Caco-2 (cell line): ENCODE measurements at regions of chr20 and their contacts with region 1.

Region 1: DNA sequence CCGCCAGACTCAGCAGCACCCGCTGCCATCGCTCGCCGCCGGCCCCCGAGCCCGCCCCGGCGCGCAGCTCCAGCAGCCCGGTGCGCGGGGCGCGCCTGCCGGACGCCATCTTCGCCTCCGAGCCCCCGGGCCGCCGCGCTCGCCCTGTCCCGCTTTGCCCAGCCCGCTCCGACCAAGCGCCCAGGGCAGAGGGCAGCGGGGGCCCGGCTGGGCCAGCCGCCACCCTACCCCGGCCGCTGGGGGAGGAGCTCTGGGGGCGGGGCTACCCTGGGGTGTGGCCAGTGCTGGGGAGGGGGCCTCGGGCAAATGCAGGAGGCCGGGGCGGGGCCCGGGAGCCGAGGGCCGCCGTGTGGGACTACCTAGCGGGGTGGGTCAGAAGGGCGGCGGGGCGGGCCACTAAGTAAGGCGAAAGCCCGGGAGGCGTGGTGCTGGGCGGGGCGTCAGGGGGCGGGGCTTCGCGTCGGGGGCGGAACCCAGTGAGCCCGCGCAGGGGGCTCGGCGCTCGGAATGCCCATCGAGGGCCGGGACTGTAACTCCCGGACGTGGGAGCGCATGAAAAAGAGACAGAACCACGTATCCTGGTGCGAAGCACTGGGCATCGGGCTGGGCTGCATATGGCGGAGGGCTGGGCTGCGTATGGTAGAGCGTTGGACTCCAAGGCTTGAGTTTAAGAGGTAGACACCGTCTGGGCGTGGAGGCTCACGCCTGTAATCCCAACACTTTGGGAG is at the start of gene SNTA1:
- DNase-seq: peak; percentile 100
- H3K4me3 ChIP-seq: peak within 1 kb of the TSS; percentile 72
- H3K4me3 Mint-ChIP-seq: peak within 1 kb of the TSS; percentile 89
- H3K27ac Mint-ChIP-seq: peak within 1 kb of the TSS; percentile 9
- H3K4me1 ChIP-seq: peaks cover 22% of the 10 kb centered on the region
- H3K4me1 Mint-ChIP-seq: peaks cover 26% of the 10 kb centered on the region
- H3K27me3 ChIP-seq: no peaks in the 10 kb centered on the region
- H3K27me3 Mint-ChIP-seq: no peaks in the 10 kb centered on the region
- CTCF ChIP-seq: no peak
- total RNA-seq, gene SNTA1: 13.6 and 15.4 TPM in 2 replicates

Region 2: GRCh38 chr20:33401184-33401920 is 42.3 kb before region 1 on chr20 and contains the start of gene CDK5RAP1:
- CTCF ChIA-PET with region 1: interaction called, 17 read pairs
- POLR2A ChIA-PET with region 1: interaction called, 15 read pairs
- intact Hi-C with region 1: loop called (anchors 1 kb)
- DNase-seq: peak; percentile 95 to 96
- H3K4me3 ChIP-seq: peak within 1 kb of the TSS; percentile 88
- H3K4me3 Mint-ChIP-seq: peak within 1 kb of the TSS; percentile 91
- H3K27ac Mint-ChIP-seq: peak within 1 kb of the TSS; percentile 76
- H3K4me1 ChIP-seq: peaks cover 18% of the 10 kb centered on the region
- H3K4me1 Mint-ChIP-seq: peaks cover 8% of the 10 kb centered on the region
- H3K27me3 ChIP-seq: no peaks in the 10 kb centered on the region
- H3K27me3 Mint-ChIP-seq: no peaks in the 10 kb centered on the region
- CTCF ChIP-seq: no peak
- total RNA-seq, gene CDK5RAP1: 116 and 120 TPM in 2 replicates

Region 3: GRCh38 chr20:33433465-33434234 is 10.0 kb before region 1 on chr20:
- CTCF ChIA-PET with region 1: interaction called, 12 read pairs
- POLR2A ChIA-PET with region 1: interaction called, 3 read pairs
- intact Hi-C with region 1: no loop called
- DNase-seq: no peak
- H3K4me3 ChIP-seq: no peak overlapping the region
- H3K4me3 Mint-ChIP-seq: no peak overlapping the region
- H3K27ac Mint-ChIP-seq: no peak overlapping the region
- H3K4me1 ChIP-seq: no peaks in the 10 kb centered on the region
- H3K4me1 Mint-ChIP-seq: no peaks in the 10 kb centered on the region
- H3K27me3 ChIP-seq: no peaks in the 10 kb centered on the region
- H3K27me3 Mint-ChIP-seq: no peaks in the 10 kb centered on the region
- CTCF ChIP-seq: no peak

Region 4: DNA sequence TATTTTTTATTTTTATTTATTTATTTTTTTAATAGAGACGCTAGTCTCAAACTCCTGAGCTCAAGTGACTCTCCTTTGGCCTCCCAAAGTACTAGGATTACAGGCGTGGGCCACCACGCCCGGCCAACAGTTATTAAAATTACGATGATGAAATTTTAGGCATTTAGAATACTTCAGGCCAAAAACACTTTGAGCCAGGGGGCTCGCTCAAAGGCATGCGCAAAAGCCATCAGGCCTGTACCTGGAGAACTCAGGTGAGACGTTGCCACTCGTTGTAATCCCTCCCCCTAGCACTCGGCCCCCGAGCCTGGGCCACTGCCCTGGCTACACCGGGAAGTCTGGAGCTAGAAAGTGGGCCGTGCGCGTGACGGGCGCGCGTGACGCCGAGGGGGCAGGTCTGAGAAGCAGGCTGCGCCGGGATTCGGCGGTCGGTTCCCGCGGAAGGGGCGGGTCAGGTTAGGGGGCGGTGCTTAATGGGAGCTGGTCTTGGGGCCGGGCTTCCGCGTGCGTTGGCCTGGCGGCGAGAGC is 45.9 kb after region 1 on chr20:
- CTCF ChIA-PET with region 1: interaction called, 8 read pairs
- POLR2A ChIA-PET with region 1: interaction called, 25 read pairs
- intact Hi-C with region 1: loop called (anchors 1 kb)
- DNase-seq: peak; percentile 100
- H3K4me3 ChIP-seq: peak overlapping the region; percentile 16
- H3K4me3 Mint-ChIP-seq: peak overlapping the region; percentile 92
- H3K27ac Mint-ChIP-seq: peak overlapping the region; percentile 38
- H3K4me1 ChIP-seq: peaks cover 14% of the 10 kb centered on the region
- H3K4me1 Mint-ChIP-seq: peaks cover 8% of the 10 kb centered on the region
- H3K27me3 ChIP-seq: no peaks in the 10 kb centered on the region
- H3K27me3 Mint-ChIP-seq: no peaks in the 10 kb centered on the region
- CTCF ChIP-seq: no peak

Region 5: DNA sequence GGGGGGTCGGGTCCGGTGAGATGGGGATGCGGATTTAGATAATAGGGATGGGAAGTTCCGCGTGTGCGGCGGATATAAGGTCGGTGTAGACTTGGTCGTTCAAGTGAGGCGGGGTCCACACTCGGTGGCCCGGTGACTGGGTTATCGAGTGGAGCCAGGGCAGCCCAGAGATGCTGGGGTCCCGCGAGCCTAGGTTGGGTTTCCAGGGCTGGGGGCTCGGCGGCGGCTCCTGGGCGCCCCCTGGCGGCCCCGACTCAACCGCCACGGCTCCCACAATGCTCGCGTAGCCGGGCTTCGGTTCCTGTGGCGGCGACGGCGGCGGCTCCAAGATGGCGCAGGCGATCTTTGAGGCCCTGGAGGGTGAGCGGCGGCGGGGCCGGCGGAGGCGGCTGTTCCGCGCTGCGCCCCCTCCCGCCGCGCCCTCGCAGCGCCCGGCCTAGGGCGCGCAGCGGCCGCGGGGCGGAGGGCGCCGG is 288.1 kb after region 1 on chr20 and contains the start of gene ZNF341:
- CTCF ChIA-PET with region 1: no interaction called
- POLR2A ChIA-PET with region 1: interaction called, 4 read pairs
- intact Hi-C with region 1: loop called (anchors 5 kb)
- DNase-seq: peak in 1 of 2 experiments; percentile 97
- H3K4me3 ChIP-seq: peak within 1 kb of the TSS; percentile 72
- H3K4me3 Mint-ChIP-seq: peak within 1 kb of the TSS; percentile 94
- H3K27ac Mint-ChIP-seq: peak within 1 kb of the TSS; percentile 88
- H3K4me1 ChIP-seq: peaks cover 23% of the 10 kb centered on the region
- H3K4me1 Mint-ChIP-seq: peaks cover 27% of the 10 kb centered on the region
- H3K27me3 ChIP-seq: no peaks in the 10 kb centered on the region
- H3K27me3 Mint-ChIP-seq: no peaks in the 10 kb centered on the region
- CTCF ChIP-seq: peak; percentile 96 to 99
- total RNA-seq, gene ZNF341: 2.9 and 4.6 TPM in 2 replicates